SK-N-SH (cell line): ENCODE measurements at regions of chrX and their contacts with region 1.

Region 1: DNA sequence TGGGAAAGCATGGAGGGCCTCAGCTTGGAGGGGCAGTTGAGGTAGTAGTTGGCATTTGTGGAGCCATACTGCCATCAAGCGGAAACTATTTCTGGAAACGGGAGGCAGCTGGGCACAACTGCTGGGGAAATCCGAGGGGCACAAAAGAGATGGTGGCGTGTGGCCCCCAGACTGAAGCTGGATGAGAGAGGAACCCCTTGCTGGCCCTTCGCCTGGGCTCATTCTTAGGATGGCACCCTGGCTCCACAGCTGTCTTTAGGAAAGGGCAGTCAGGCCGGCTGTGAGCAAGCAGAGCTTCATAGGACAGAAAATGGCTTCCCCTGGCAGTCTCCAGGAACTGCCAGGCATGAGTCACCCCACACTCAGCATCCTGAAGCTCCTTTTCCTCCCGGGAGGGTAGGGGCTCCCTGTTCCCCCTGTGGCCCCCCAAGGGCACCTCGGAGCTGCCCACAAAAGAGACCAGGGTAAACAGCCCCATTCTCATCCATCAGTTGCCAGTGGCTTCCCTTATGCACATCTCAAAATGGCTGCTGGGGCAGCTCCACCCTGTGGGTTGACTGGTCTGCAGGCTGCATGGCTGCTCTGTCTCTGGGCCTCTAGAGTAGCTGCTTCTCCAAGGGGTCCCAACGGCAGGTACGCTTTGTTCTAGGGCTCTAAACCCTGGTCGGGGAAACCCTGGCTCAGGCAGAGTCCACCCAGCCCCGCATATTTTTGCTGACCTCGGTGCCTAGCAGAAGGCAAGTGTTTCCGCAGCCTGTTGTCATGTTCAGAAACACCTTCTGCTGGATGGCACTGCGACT is 64.7 kb downstream of the NBDY start:
- DNase-seq: peak; percentile 0
- H3K4me3 ChIP-seq: no peak overlapping the region
- H3K27ac ChIP-seq: no peak overlapping the region
- H3K4me1 ChIP-seq: peaks cover 0 to 6% of the 10 kb centered on the region in 2 experiments; a peak in 1 of 4 replicates
- H3K27me3 ChIP-seq: no peaks in the 10 kb centered on the region
- CTCF ChIP-seq: 0 out of 2 replicates have a peak, but pooled peaks have one; percentile 9
- EP300 ChIP-seq: no peak
- RAD21 ChIP-seq: peak; percentile 25; the same call in 1 of the 2 replicates

Region 2: DNA sequence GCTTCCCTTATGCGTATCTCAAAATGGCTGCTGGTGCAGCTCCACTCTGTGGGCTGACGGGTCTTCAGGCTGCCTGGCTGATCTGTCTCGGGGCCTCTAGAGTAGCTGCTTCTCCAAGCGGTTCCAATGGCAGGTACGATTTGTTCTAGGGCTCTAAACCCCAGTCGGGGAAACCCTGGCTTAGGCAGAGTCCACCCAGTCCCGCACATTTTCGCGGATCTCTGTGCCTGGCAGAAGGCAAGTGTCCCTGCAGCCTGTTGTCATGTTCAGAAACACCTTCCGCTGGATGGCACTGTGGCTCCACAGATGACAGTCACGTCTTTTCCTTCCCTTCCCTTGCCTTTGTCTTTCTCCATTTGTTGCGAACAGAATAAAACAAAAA is 10.3 kb before region 1 on chrX:
- CTCF ChIA-PET with region 1: interaction called, 11 read pairs
- POLR2A ChIA-PET with region 1: no interaction called
- DNase-seq: peak; percentile 42
- H3K4me3 ChIP-seq: peak overlapping the region in 1 of 2 experiments; percentile 31; a peak in 2 of 4 replicates
- H3K27ac ChIP-seq: peak overlapping the region in 1 of 2 experiments; percentile 62; a peak in 1 of 4 replicates
- H3K4me1 ChIP-seq: peaks cover 0 to 4% of the 10 kb centered on the region in 2 experiments; a peak in 1 of 4 replicates
- H3K27me3 ChIP-seq: no peaks in the 10 kb centered on the region
- CTCF ChIP-seq: peak; percentile 41
- EP300 ChIP-seq: no peak
- RAD21 ChIP-seq: peak; percentile 75

Region 3: GRCh38 chrX:57251965-57252364 is 458.2 kb after region 1 on chrX:
- CTCF ChIA-PET with region 1: no interaction called
- POLR2A ChIA-PET with region 1: no interaction called
- DNase-seq: no peak
- H3K4me3 ChIP-seq: no peak overlapping the region; a peak in 1 of 4 replicates
- H3K27ac ChIP-seq: no peak overlapping the region
- H3K4me1 ChIP-seq: no peaks in the 10 kb centered on the region
- H3K27me3 ChIP-seq: no peaks in the 10 kb centered on the region
- CTCF ChIP-seq: no peak
- EP300 ChIP-seq: no peak
- RAD21 ChIP-seq: no peak